ENCODE measurements at regions of chr17 and their contacts with region 1.

Region 1: GRCh38 chr17:8314797-8315763 is 5.0 kb downstream of the ARHGEF15 start:
- DNase-seq: no peak
- H3K4me3 ChIP-seq: no peak overlapping the region
- H3K27ac ChIP-seq: no peak overlapping the region
- H3K4me1 ChIP-seq: no peaks in the 10 kb centered on the region
- CTCF ChIP-seq: no peak

Region 2: DNA sequence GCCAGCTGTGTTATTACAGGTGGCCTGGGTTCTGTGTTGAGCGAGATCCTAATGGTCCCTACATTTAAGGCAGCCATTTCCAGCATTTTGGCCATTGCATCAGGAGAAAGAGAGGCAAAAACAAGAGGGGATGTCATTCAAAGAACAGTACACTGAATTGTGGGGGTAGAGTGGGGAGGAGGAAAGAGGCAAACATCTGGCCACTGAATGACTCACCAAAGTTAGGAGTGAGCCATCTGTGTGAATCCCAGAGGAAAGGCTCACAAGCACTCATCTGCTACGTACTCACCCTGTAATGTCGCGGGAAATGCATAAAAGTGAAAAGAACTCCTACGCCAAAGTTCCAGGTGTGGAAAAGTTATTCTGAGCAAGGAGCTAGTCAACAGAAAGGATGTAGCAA is 44.7 kb after region 1 on chr17:
- CTCF ChIA-PET with region 1: no interaction called
- POLR2A ChIA-PET with region 1: no interaction called
- intact Hi-C with region 1: loop called (anchors 5 kb)
- DNase-seq: no peak
- H3K4me3 ChIP-seq: no peak overlapping the region
- H3K27ac ChIP-seq: no peak overlapping the region
- H3K4me1 ChIP-seq: no peaks in the 10 kb centered on the region
- CTCF ChIP-seq: no peak

Measured in OCI-LY7 (cell line).